CD8-positive, alpha-beta T cell (primary cell): ENCODE measurements at regions of chr1 and their contacts with region 1.

Region 1: GRCh38 chr1:236829085-236829484 is 34.0 kb downstream of the MTR start:
- DNase-seq: no peak
- ATAC-seq: no peak
- H3K4me3 ChIP-seq: no peak overlapping the region
- H3K4me3 Mint-ChIP-seq: no peak overlapping the region
- H3K27ac ChIP-seq: no peak overlapping the region
- H3K27ac Mint-ChIP-seq: no peak overlapping the region
- H3K4me1 ChIP-seq: no peaks in the 10 kb centered on the region
- H3K4me1 Mint-ChIP-seq: peaks cover 3% of the 10 kb centered on the region
- H3K27me3 ChIP-seq: no peaks in the 10 kb centered on the region
- H3K27me3 Mint-ChIP-seq: no peaks in the 10 kb centered on the region
- CTCF ChIP-seq: no peak

Region 2: DNA sequence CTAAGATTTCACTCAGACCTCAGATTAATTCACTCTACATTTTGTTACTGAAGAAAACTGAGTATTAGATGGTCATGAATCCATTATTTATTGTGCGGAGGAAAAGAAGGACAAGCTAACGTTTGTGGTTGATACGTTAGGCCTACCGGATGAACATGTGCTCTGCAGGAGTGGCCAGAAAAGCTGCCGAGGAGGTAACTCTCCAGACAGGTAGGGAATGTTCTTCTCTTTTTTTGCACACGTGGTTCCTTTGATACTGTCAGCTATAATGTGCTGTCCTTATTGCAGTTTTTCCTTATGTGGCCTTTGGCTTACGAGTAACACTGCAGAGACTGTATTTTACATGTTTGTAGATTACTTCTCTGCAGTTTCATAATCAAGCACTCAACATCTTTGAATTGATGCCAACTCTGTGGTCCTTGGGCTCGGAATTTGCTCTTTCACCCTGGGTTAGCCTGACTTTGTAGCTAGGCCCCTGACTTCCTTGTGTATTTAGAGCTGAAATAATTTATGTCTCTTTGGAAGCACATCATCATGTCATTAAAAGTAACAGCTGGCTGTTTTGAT is 20.4 kb before region 1 on chr1:
- CTCF ChIA-PET with region 1: interaction called, 3 read pairs
- POLR2A ChIA-PET with region 1: no interaction called
- intact Hi-C with region 1: loop called in 1 of 2 experiments (anchors 2 kb)
- DNase-seq: no peak
- ATAC-seq: no peak
- H3K4me3 ChIP-seq: no peak overlapping the region
- H3K4me3 Mint-ChIP-seq: no peak overlapping the region
- H3K27ac ChIP-seq: no peak overlapping the region
- H3K27ac Mint-ChIP-seq: no peak overlapping the region
- H3K4me1 ChIP-seq: no peaks in the 10 kb centered on the region
- H3K4me1 Mint-ChIP-seq: peaks cover 21% of the 10 kb centered on the region
- H3K27me3 ChIP-seq: no peaks in the 10 kb centered on the region
- H3K27me3 Mint-ChIP-seq: no peaks in the 10 kb centered on the region
- CTCF ChIP-seq: no peak

Region 3: DNA sequence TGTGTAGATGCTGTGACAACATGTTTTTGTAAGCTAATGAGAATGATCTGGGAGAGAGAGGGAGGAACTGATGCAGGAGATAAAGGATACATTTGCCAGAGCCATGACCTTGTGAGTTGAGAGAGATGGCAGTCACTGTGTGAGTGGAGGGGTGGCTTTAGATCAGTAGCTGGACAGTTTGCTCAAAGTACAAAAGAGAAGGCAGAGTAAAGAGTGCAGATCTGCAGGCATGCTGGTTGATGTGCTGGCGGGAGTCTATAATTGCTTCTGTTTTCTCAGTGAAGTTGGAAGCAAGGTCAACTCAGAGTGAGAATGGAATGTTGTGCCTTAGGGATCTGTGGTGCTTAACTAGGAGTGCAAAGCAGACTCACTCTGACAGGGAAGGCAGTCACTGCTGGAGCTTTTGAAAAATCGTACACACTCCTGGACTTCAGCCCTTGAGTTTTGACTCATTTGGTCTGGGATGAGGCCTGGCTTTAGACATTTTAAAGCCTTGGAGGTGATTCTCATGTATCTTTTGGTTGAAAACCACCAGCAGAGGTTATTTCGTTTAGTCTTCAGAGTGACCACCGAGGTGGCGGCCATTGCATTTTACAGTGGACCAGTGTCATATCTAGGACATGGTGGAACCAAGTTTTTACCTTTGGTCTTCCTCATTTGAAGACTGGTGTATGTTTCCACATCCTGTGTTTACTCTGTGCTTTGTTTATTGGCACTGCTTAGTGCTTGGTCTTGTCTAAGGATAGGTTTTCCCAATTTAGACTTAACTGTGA is 15.6 kb after region 1 on chr1:
- CTCF ChIA-PET with region 1: no interaction called
- POLR2A ChIA-PET with region 1: no interaction called
- intact Hi-C with region 1: no loop called
- DNase-seq: no peak
- ATAC-seq: no peak
- H3K4me3 ChIP-seq: no peak overlapping the region
- H3K4me3 Mint-ChIP-seq: no peak overlapping the region
- H3K27ac ChIP-seq: no peak overlapping the region
- H3K27ac Mint-ChIP-seq: no peak overlapping the region
- H3K4me1 ChIP-seq: peaks cover 11% of the 10 kb centered on the region
- H3K4me1 Mint-ChIP-seq: peaks cover 20% of the 10 kb centered on the region
- H3K27me3 ChIP-seq: no peaks in the 10 kb centered on the region
- H3K27me3 Mint-ChIP-seq: no peaks in the 10 kb centered on the region
- CTCF ChIP-seq: no peak

Region 4: DNA sequence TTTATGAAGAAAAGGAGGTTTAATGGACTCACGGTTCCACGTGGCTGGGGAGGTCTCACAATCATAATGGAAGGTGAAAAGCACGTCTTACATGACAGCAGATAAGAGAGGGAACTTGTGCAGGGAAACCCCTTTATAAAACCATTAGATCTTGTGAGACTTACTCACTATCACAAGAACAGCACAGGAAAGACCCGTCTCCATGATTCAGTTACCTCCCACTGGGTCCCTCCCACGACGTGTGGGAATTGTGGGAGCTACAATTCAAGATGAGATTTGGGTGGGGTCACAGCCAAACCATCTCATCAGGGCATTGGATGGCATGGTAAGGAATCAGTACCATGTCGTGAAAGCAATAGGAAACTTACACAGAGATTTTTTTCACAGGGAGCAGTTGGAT is 29.1 kb after region 1 on chr1:
- CTCF ChIA-PET with region 1: no interaction called
- POLR2A ChIA-PET with region 1: no interaction called
- intact Hi-C with region 1: no loop called
- DNase-seq: no peak
- ATAC-seq: no peak
- H3K4me3 ChIP-seq: no peak overlapping the region
- H3K4me3 Mint-ChIP-seq: no peak overlapping the region
- H3K27ac ChIP-seq: no peak overlapping the region
- H3K27ac Mint-ChIP-seq: no peak overlapping the region
- H3K4me1 ChIP-seq: peaks cover 23% of the 10 kb centered on the region
- H3K4me1 Mint-ChIP-seq: peaks cover 27% of the 10 kb centered on the region
- H3K27me3 ChIP-seq: no peaks in the 10 kb centered on the region
- H3K27me3 Mint-ChIP-seq: no peaks in the 10 kb centered on the region
- CTCF ChIP-seq: no peak